Transverse colon (tissue), 4 donors: ENCODE measurements at regions of chr2 and their contacts with region 1.

Region 1: DNA sequence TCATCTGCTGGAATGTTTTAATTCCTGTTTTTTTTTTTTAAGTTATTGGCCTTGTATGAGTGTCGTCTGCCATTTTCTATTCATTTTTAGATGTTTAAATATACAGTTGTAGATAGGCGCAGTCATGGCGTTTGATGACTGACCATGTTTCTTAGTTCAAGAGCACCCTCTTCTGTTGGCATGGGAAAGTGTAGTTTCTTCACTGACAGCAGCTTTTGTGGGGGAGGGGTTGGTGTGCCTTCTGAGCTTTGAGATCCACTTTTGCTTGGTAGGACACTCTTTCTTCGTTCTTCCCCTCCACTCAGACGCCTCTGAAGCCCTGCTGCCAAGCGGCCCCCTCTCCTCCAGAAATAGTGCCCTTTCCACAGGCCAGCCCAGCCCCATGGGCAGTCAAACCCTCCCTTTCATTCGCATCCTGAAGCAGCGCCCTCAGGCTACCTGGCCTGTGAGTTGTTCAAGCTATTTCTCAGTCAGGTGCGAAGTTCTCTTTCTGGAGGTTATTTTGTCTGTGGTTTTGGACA is 492.0 kb downstream of the TNS1 start:
- DNase-seq: peak; percentile 26
- H3K4me3 ChIP-seq: no peak overlapping the region
- H3K27ac ChIP-seq: no peak overlapping the region
- H3K4me1 ChIP-seq: peaks cover 0 to 9% (median 2%) of the 10 kb centered on the region in 4 donors
- H3K27me3 ChIP-seq: no peaks in the 10 kb centered on the region
- CTCF ChIP-seq: peak; percentile 41 to 62 (median 51)
- EP300 ChIP-seq: no peak
- POLR2A ChIP-seq: no peak

Region 2: DNA sequence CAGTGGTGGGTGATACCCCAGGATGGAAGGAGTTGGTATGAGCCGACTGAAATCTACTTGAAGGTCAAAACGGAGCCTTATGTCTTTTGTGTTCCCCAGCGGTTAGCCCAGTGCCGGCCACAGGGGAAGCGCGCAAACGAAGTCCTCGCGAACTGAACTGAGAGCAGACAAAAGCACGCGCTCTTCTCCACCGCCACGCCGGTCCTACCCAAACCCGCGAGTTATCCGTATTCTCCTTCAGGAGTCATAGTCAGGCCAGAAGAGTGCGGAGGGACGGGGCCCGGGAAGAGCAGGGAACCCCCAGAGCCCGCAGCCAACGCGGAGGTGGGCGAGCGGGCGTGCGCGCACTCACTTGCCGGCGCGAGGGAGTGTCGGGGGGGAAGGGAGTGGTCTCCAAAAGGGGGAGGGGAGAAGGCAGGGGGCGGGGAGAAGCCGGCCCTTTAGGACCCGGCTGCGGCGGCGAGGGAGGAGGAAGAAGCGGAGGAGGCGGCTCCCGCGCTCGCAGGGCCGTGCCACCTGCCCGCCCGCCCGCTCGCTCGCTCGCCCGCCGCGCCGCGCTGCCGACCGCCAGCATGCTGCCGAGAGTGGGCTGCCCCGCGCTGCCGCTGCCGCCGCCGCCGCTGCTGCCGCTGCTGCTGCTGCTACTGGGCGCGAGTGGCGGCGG is 877.7 kb before region 1 on chr2 and contains the start of gene IGFBP2:
- in situ Hi-C with region 1: no loop called
- intact Hi-C with region 1: no loop called
- DNase-seq: peak; percentile 52
- H3K4me3 ChIP-seq: peak within 1 kb of the TSS; percentile 43 to 65 (median 57)
- H3K27ac ChIP-seq: peak within 1 kb of the TSS; percentile 23 to 78 (median 64)
- H3K4me1 ChIP-seq: peaks cover 0 to 43% (median 33%) of the 10 kb centered on the region in 4 donors
- H3K27me3 ChIP-seq: peaks cover 58% of the 10 kb centered on the region
- CTCF ChIP-seq: no peak
- EP300 ChIP-seq: no peak
- POLR2A ChIP-seq: no peak
- total RNA-seq, gene IGFBP2: 10.5 to 155 (median 101) TPM

Region 3: GRCh38 chr2:216687646-216688045 is 823.2 kb before region 1 on chr2:
- in situ Hi-C with region 1: loop called (anchors 10 to 25 kb)
- intact Hi-C with region 1: no loop called
- DNase-seq: no peak
- H3K4me3 ChIP-seq: no peak overlapping the region
- H3K27ac ChIP-seq: peak overlapping the region; percentile 45 to 85 (median 69)
- H3K4me1 ChIP-seq: peaks cover 17 to 76% (median 22%) of the 10 kb centered on the region in 4 donors
- H3K27me3 ChIP-seq: peaks cover 48% of the 10 kb centered on the region
- CTCF ChIP-seq: peak in 1 of 5 experiments; percentile 10
- EP300 ChIP-seq: no peak
- POLR2A ChIP-seq: no peak

Region 4: DNA sequence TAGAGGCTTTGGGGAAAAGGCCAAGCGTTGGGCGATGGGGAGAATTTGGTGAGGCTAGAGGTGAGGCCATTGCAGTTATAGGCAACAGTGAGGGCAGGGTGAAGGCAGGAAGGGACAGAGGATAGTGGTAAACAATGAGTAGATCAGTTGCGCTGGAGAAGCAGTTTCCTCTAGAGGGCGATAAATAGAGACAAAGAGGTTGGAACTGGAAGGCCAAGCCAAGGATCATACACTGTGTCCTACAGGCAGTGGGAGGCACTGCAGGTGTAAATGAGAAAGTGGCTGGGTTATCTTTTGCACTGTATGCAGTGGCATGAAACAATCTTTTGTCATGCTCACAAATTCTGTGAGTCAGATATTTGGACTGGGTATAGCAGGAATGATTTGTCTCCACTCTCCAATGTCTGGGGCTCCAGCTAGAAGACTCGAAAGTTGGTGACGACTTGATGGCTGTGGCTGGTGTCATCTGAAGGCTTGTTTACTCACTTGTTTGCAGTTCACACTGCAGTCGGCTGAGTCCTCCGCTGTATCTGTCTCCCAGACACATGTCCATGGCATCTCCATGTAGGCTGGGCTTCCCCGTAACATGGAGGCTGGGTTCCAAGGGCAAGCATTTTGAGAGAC is 733.1 kb before region 1 on chr2:
- in situ Hi-C with region 1: no loop called
- intact Hi-C with region 1: no loop called
- DNase-seq: no peak
- H3K4me3 ChIP-seq: no peak overlapping the region
- H3K27ac ChIP-seq: no peak overlapping the region
- H3K4me1 ChIP-seq: peaks cover 0 to 4% (median 0%) of the 10 kb centered on the region in 4 donors
- H3K27me3 ChIP-seq: no peaks in the 10 kb centered on the region
- CTCF ChIP-seq: peak; percentile 25 to 52 (median 42)
- EP300 ChIP-seq: no peak
- POLR2A ChIP-seq: no peak

Region 5: DNA sequence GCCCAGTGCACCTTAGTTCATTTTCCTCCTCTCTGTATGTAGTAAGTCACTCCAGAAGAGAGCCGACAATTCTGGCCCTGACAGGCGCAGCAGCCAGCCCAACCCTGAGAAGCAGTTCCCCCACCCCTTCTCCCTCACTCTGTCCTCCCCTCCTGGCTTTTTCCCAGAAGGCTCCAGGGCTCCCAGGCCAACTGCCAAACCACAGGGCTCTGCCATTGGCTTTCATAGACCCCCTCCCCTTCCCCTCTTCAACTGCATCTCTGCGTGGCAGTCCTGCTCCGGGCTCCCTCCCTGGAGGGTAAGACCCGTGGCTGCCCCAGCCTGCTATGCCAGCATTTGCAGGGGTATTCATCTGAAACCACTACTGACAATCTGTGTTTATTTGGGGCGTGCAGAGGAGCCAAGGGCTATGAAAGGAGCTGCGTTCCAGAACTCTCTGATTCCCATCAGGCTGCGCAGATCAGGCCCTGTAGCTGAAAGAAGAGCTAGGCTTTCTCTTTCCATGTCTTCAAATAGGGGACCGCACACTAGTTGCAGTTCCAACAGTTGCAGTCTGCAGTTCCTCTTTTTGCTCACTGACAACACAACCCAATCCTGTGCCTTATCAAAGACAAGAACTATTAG is 262.4 kb before region 1 on chr2:
- in situ Hi-C with region 1: no loop called
- intact Hi-C with region 1: loop called (anchors 10 kb)
- DNase-seq: peak; percentile 50
- H3K4me3 ChIP-seq: no peak overlapping the region
- H3K27ac ChIP-seq: peak overlapping the region; percentile 72 to 87 (median 83)
- H3K4me1 ChIP-seq: peaks cover 3 to 21% (median 11%) of the 10 kb centered on the region in 4 donors
- H3K27me3 ChIP-seq: no peaks in the 10 kb centered on the region
- CTCF ChIP-seq: no peak
- EP300 ChIP-seq: no peak
- POLR2A ChIP-seq: no peak

Region 6: DNA sequence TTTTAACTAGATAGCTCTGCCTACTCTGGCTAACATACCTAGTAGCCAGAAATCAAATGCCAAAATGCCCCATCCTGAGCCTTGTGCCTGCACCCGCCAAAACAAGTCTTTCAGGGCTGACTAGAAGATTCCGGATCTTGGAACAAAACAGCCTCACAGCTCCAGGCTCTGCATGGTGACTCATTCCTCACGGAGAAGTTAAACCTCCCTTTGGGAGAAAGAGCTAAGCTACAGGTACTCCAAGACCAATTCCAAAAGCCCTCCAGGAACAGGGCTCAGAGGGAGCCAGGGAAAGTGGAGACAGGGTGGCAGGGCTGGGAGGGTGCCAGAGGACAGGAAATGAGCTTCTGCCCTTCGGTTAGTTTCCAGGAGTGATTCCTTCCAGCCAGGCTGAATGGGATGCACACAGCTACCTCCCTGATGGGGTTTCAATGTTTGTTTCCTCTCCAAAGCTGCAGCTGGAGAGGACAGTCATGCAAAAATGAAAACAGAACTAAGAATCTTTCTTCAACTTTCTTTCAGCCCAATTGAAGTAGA is 196.4 kb after region 1 on chr2:
- in situ Hi-C with region 1: loop called in 1 of 4 experiments (anchors 10 kb)
- intact Hi-C with region 1: loop called (anchors 10 kb)
- DNase-seq: no peak
- H3K4me3 ChIP-seq: no peak overlapping the region
- H3K27ac ChIP-seq: peak overlapping the region; percentile 27 to 65 (median 50)
- H3K4me1 ChIP-seq: peaks cover 0 to 20% (median 0%) of the 10 kb centered on the region in 4 donors
- H3K27me3 ChIP-seq: no peaks in the 10 kb centered on the region
- CTCF ChIP-seq: no peak
- EP300 ChIP-seq: no peak
- POLR2A ChIP-seq: no peak

Region 7: GRCh38 chr2:217713395-217714286 is 202.8 kb after region 1 on chr2:
- in situ Hi-C with region 1: loop called in 1 of 4 experiments (anchors 10 kb)
- intact Hi-C with region 1: loop called (anchors 10 kb)
- DNase-seq: peak; percentile 75
- H3K4me3 ChIP-seq: no peak overlapping the region
- H3K27ac ChIP-seq: peak overlapping the region; percentile 34 to 76 (median 58)
- H3K4me1 ChIP-seq: peaks cover 3 to 36% (median 7%) of the 10 kb centered on the region in 4 donors
- H3K27me3 ChIP-seq: no peaks in the 10 kb centered on the region
- CTCF ChIP-seq: peak; percentile 86 to 97 (median 94)
- EP300 ChIP-seq: no peak
- POLR2A ChIP-seq: no peak

Region 8: GRCh38 chr2:218046238-218046637 is 535.4 kb after region 1 on chr2:
- in situ Hi-C with region 1: no loop called
- intact Hi-C with region 1: no loop called
- DNase-seq: no peak
- H3K4me3 ChIP-seq: no peak overlapping the region
- H3K27ac ChIP-seq: peak overlapping the region in 2 of 4 donors; percentile 21 to 25
- H3K4me1 ChIP-seq: no peaks in the 10 kb centered on the region
- H3K27me3 ChIP-seq: no peaks in the 10 kb centered on the region
- CTCF ChIP-seq: no peak
- EP300 ChIP-seq: no peak
- POLR2A ChIP-seq: no peak